PC-9 (cell line): ENCODE measurements at regions of chr15 and their contacts with region 1.

Region 1: DNA sequence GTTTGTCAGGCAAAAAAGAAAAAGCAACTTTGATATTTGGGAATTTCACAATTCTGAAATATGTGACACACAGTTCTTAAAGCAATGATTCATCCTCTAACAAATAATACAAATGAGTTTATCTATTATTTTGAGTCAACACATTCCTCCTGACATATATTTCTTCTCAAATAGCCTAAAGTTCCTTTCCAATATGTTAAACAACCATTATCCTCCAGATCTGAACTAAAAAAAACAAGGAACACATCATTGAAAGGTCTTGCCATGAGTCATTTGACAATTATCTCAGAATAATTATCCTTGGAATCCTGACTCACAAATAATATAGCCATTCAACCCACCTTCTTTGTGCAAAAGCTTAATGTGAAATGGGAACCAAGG is 208.7 kb upstream of the CDIN1 start:
- DNase-seq: peak in 1 of 2 experiments; percentile 96
- H3K4me3 ChIP-seq: no peak overlapping the region
- H3K27ac ChIP-seq: peak overlapping the region; percentile 94
- H3K4me1 ChIP-seq: peaks cover 73% of the 10 kb centered on the region
- H3K27me3 ChIP-seq: no peaks in the 10 kb centered on the region
- CTCF ChIP-seq: no peak

Region 2: DNA sequence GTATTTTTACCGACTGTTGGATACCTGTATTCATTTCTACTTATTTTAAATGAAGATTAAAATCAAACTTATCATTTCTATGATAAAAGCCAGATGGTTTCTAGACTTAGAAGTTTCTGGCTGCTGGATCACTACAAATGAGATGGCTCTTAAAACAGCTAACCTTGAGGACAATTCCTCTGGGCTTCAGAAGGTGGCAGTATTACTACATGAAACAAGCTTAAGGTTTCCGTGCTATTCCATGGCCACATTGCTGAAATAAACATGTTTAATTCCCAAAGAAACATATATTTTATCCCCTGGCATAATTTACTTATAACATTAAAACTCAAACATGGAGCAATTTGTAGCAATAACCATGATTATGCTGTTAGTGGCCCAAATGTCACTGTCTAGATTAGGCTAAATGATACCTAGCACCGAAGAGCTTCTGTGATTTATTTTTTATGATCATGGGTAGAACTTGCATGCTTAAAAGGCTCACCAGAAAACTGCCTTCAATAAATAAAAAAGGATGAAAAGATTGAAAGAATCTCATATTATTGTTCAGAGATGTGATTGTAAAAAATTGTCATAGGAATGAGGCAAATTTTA is 1081.6 kb before region 1 on chr15:
- CTCF ChIA-PET with region 1: no interaction called
- POLR2A ChIA-PET with region 1: no interaction called
- intact Hi-C with region 1: loop called (anchors 2 kb)
- DNase-seq: peak in 1 of 2 experiments; percentile 43
- H3K4me3 ChIP-seq: no peak overlapping the region
- H3K27ac ChIP-seq: no peak overlapping the region
- H3K4me1 ChIP-seq: peaks cover 17% of the 10 kb centered on the region; the same call in 1 of the 2 replicates
- H3K27me3 ChIP-seq: no peaks in the 10 kb centered on the region
- CTCF ChIP-seq: peak; percentile 75

Region 3: DNA sequence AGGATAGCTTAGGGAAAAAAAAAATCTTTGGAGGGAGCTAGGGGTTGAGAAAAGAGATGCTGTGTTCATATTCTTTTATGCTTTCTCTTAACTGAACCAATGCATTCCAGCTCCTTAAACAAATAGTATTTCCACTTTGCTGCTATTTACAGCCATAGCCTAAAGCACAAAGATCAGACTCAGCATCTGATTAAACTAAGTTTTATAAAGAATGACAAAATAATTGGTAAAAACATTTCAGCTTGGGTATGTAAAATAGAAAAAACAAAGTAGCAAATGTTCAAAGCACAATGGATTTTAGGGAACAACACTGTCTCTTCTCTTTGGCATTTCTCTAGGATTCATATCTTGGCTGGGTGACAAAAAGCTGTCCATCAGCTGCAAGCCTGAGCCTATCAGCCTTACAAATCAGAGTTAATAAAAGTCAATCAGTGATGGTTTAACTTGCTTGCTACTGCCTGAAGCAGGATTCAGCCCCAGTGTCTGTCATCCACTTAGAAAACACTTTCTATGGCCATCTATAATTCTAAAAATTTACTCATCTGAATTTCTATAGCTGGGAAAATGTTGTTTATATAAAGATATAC is 23.4 kb before region 1 on chr15:
- CTCF ChIA-PET with region 1: no interaction called
- POLR2A ChIA-PET with region 1: no interaction called
- intact Hi-C with region 1: no loop called
- DNase-seq: no peak
- H3K4me3 ChIP-seq: no peak overlapping the region
- H3K27ac ChIP-seq: no peak overlapping the region
- H3K4me1 ChIP-seq: 0 out of 2 replicates have a peak, but pooled peaks cover 6% of the 10 kb centered on the region
- H3K27me3 ChIP-seq: no peaks in the 10 kb centered on the region
- CTCF ChIP-seq: no peak

Region 4: GRCh38 chr15:36392676-36393266 is 22.0 kb after region 1 on chr15:
- CTCF ChIA-PET with region 1: interaction called, 3 read pairs
- POLR2A ChIA-PET with region 1: no interaction called
- intact Hi-C with region 1: loop called (anchors 1 kb)
- DNase-seq: peak; percentile 31 to 74
- H3K4me3 ChIP-seq: no peak overlapping the region
- H3K27ac ChIP-seq: peak overlapping the region; percentile 49
- H3K4me1 ChIP-seq: peaks cover 17% of the 10 kb centered on the region
- H3K27me3 ChIP-seq: no peaks in the 10 kb centered on the region
- CTCF ChIP-seq: no peak

Region 5: GRCh38 chr15:36428102-36428845 is 57.5 kb after region 1 on chr15:
- CTCF ChIA-PET with region 1: no interaction called
- POLR2A ChIA-PET with region 1: no interaction called
- intact Hi-C with region 1: loop called (anchors 1 kb)
- DNase-seq: peak; percentile 66 to 90
- H3K4me3 ChIP-seq: no peak overlapping the region
- H3K27ac ChIP-seq: peak overlapping the region; percentile 95
- H3K4me1 ChIP-seq: peaks cover 22% of the 10 kb centered on the region
- H3K27me3 ChIP-seq: no peaks in the 10 kb centered on the region
- CTCF ChIP-seq: no peak

Region 6: DNA sequence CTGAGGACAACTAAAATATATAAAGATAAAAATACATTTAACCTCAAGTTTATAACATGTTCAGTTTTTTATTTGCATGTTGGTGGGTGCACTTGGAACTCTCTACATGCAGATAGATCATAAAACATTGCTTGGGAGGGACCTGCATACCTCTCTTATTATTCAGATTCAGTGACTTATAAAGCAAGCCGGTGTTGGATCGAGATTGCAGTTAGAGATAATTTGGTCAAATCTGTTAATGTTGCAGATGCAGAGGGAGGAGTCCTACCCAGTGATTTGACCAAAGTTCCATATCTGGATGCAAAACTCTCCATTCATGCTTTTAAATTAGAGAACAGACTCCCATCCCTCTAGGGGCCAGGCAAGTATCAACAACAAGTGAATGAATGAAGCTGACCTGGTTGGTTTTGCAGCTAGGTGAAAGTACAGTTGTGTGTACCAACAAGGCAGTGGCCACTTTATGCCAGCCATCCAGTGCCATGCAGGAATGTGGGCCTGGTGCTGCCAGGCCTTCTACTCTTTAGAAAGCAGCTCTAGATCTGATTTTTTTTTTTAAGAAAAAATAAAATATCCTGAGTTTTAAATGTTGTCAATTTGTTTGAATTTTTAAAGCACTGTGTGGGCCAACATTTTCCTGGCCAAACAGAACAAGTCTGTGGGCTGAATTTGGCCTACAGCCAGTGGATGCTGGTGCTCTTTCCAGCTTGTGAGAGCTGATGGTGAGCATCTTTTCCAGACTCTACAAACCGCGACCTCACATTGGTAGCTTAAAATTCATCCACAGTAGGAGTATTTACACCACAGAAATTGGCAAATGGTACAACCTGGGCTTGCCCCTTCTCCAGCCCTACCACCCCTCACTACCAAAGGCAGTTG is 221.0 kb after region 1 on chr15:
- CTCF ChIA-PET with region 1: no interaction called
- POLR2A ChIA-PET with region 1: no interaction called
- intact Hi-C with region 1: loop called (anchors 10 kb)
- DNase-seq: peak in 1 of 2 experiments; percentile 16
- H3K4me3 ChIP-seq: no peak overlapping the region
- H3K27ac ChIP-seq: no peak overlapping the region
- H3K4me1 ChIP-seq: no peaks in the 10 kb centered on the region
- H3K27me3 ChIP-seq: no peaks in the 10 kb centered on the region
- CTCF ChIP-seq: no peak

Region 7: DNA sequence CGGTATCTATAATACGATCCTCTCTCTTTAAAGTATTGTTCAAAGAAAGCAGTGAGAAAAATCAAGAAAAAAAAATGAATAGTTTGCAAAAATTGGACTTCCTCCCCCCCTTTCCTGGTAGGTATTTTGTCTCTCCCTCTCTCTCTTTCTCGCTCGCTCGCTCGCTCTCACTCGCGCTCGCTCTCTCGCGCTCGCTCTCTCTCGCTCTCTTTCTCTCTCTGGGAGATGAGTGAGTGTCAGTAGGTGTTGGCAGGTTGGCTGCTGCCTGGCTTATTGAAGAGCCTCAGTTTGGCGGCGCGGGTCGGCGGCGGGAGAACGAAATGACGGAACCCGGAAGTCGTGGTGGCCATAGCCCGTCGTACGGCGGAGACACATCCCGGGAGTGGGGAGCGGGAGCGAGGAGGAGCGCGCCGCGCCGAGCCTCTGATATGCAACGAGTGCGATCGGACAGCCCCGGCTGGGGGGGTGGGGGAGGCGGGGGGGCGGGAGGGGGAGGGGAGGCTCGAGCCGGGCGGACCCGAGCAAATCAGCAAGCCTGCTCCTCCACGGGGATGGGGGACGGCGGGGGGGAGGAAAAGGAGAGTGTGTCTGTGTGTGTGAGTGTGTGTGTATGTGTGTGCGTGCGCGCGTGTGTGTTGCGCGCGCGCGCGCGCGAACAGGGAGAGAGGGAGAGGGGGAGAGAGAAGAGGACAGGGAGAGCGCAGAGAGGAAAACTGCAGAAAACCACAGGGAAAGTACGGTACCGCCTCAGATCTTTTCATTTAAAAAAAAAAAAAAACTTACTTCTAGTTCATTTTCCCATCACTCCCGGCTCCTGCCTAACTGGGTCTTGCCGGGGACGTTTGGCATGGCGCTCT is 729.6 kb after region 1 on chr15 and contains the start of gene MEIS2:
- CTCF ChIA-PET with region 1: no interaction called
- POLR2A ChIA-PET with region 1: no interaction called
- intact Hi-C with region 1: loop called (anchors 10 kb)
- DNase-seq: peak; percentile 66 to 85
- H3K4me3 ChIP-seq: peak within 1 kb of the TSS; percentile 91
- H3K27ac ChIP-seq: peak within 1 kb of the TSS; percentile 89
- H3K4me1 ChIP-seq: peaks cover 17% of the 10 kb centered on the region; the same call in 1 of the 2 replicates
- H3K27me3 ChIP-seq: no peaks in the 10 kb centered on the region
- CTCF ChIP-seq: no peak
- total RNA-seq, gene MEIS2: 25.0 and 29.1 TPM in 2 replicates